PC-3 (cell line): ENCODE measurements at regions of chr12 and their contacts with region 1.

Region 1: DNA sequence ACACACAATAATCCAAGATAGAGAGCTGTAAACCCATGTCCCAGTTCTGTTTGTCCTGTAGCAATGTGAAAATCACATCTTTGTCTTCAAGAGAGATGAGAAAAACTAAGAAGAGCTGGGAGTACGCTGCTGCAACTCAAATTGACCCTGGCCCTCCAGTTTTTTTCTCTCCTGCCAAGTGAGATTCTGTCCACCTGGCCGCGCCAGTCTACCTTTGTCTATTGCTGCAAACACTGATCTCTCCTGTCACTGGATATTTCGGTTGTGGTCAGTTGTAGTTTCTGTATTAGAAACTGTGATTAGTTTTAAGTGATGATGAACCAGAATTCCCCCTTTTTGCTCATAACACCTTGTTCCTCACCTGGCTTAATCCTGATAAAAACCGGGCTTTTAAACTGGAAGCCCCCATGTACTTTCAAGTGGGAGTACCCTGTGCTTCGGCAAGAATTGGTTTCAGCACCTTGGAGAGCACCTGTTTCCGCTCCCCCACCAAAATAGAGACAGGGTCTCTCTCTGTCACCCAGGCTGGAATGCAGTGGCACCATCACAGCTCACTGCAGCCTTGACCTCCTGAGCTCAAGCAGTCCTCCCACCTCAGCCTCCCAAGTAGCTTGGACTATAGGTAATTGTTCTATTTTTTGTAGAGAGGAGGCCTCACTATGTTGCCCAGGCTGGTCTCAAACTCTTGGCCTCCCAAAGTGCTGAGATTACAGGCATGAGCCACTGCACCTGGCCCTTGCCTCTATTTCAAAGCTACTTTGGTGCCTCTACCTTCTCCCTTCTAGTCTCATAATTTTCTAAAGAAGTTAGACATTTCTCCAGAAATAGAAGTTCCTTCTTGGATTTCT is 156.8 kb downstream of the PHETA1 start:
- DNase-seq: peak; percentile 14
- ATAC-seq: no peak
- H3K4me3 ChIP-seq: no peak overlapping the region
- H3K27ac ChIP-seq: no peak overlapping the region
- H3K4me1 ChIP-seq: no peaks in the 10 kb centered on the region
- H3K27me3 ChIP-seq: peaks cover 96% of the 10 kb centered on the region
- CTCF ChIP-seq: no peak

Region 2: GRCh38 chr12:111046896-111047295 is 165.2 kb before region 1 on chr12:
- CTCF ChIA-PET with region 1: no interaction called
- POLR2A ChIA-PET with region 1: interaction called, 11 read pairs
- intact Hi-C with region 1: no loop called
- DNase-seq: no peak
- ATAC-seq: no peak
- H3K4me3 ChIP-seq: no peak overlapping the region
- H3K27ac ChIP-seq: no peak overlapping the region
- H3K4me1 ChIP-seq: no peaks in the 10 kb centered on the region
- H3K27me3 ChIP-seq: 0 out of 2 replicates have a peak, but pooled peaks cover 4% of the 10 kb centered on the region
- CTCF ChIP-seq: no peak

Region 3: DNA sequence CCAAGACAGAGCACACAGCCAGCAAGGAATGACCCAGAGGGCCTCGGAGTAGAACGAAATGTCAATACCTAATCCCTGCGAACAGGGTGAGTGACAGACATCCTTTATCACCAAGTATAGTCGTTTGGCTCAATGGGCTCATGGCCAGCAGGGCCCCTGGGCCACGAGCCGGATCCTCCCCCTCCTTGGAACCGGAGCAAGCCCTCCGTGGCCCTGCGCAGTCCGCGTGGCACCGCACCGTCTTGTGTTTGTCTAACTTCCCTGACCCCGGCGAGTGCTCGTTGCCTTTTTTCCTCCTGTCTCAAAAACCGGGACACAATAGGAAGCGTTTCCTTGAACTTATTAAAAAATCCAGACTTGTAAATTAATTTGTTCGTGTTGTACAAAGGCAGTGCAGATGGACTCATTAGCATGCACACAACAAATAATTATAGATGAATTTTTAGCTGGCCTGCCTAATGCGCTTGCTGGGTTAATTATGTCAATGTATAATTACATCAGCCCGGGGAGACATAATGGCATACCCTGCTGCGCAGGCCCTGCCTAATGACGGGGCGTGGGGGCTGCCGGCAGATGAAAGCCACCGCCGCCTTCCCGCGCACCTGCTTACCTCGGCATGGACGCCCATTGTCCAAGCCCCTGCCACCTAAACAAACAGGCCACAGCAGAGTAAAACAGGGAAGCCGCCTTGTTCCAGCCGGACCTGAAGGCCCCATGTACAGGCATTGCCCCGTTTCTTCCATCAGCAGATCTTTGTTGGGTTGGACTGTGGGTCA is 75.2 kb after region 1 on chr12:
- CTCF ChIA-PET with region 1: no interaction called
- POLR2A ChIA-PET with region 1: no interaction called
- intact Hi-C with region 1: no loop called
- DNase-seq: no peak
- ATAC-seq: no peak
- H3K4me3 ChIP-seq: no peak overlapping the region
- H3K27ac ChIP-seq: no peak overlapping the region
- H3K4me1 ChIP-seq: no peaks in the 10 kb centered on the region
- H3K27me3 ChIP-seq: peaks cover 12% of the 10 kb centered on the region
- CTCF ChIP-seq: no peak